ENCODE measurements at regions of chr1 and their contacts with region 1.

Region 1: GRCh38 chr1:156659994-156660751 is 17.0 kb downstream of the NES start:
- DNase-seq: peak; percentile 82 to 96 (median 89)
- ATAC-seq: peak; percentile 95
- H3K4me3 ChIP-seq: no peak overlapping the region
- H3K4me3 Mint-ChIP-seq: peak overlapping the region in 9 of 10 donors; percentile 4 to 90 (median 48)
- H3K27ac ChIP-seq: no peak overlapping the region
- H3K27ac Mint-ChIP-seq: peak overlapping the region in 8 of 9 donors; percentile 53 to 87 (median 69)
- H3K4me1 ChIP-seq: peaks cover 32 to 39% of the 10 kb centered on the region in 2 donors
- H3K4me1 Mint-ChIP-seq: peaks cover 33 to 62% (median 44%) of the 10 kb centered on the region in 7 donors
- H3K27me3 ChIP-seq: peaks cover 0 to 13% of the 10 kb centered on the region in 2 donors
- H3K27me3 Mint-ChIP-seq: peaks cover 18 to 30% (median 24%) of the 10 kb centered on the region in 5 donors

Region 2: GRCh38 chr1:156625436-156626078 is 34.6 kb before region 1 on chr1:
- CTCF ChIA-PET with region 1: interaction called, 18 read pairs
- POLR2A ChIA-PET with region 1: interaction called, 3 read pairs
- intact Hi-C with region 1: loop called (anchors 1 kb)
- DNase-seq: peak; percentile 51 to 78 (median 65)
- ATAC-seq: peak; percentile 83
- H3K4me3 ChIP-seq: peak overlapping the region; percentile 47
- H3K4me3 Mint-ChIP-seq: peak overlapping the region; percentile 74 to 92 (median 81)
- H3K27ac ChIP-seq: no peak overlapping the region
- H3K27ac Mint-ChIP-seq: peak overlapping the region in 4 of 9 donors; percentile 8 to 44 (median 21)
- H3K4me1 ChIP-seq: peaks cover 9 to 15% of the 10 kb centered on the region in 2 donors
- H3K4me1 Mint-ChIP-seq: peaks cover 7 to 13% (median 11%) of the 10 kb centered on the region in 7 donors
- H3K27me3 ChIP-seq: peaks cover 8 to 31% of the 10 kb centered on the region in 2 donors
- H3K27me3 Mint-ChIP-seq: peaks cover 46 to 71% (median 59%) of the 10 kb centered on the region in 5 donors

Region 3: DNA sequence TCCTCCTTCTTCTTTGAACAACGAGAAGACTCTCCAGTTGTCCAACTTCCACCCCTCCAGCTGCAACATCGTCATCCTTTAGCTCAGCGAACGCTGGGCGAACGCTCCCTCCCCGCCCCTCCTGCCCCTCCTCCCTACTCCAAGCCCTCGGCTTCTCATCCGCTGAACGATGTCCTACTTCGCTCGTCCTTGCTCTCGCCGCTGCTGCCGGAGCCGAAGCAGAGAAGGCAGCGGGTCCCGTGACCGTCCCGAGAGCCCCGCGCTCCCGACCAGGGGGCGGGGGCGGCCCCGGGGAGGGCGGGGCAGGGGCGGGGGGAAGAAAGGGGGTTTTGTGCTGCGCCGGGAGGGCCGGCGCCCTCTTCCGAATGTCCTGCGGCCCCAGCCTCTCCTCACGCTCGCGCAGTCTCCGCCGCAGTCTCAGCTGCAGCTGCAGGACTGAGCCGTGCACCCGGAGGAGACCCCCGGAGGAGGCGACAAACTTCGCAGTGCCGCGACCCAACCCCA is 18.4 kb before region 1 on chr1 and contains the start of gene BCAN:
- CTCF ChIA-PET with region 1: interaction called, 4 read pairs
- POLR2A ChIA-PET with region 1: interaction called, 4 read pairs
- intact Hi-C with region 1: loop called (anchors 2 kb)
- DNase-seq: no peak
- ATAC-seq: peak; percentile 31
- H3K4me3 ChIP-seq: no peak within 1 kb of the TSS
- H3K4me3 Mint-ChIP-seq: peak within 1 kb of the TSS; percentile 63 to 82 (median 74)
- H3K27ac ChIP-seq: no peak within 1 kb of the TSS
- H3K27ac Mint-ChIP-seq: no peak within 1 kb of the TSS
- H3K4me1 ChIP-seq: peaks cover 0 to 26% of the 10 kb centered on the region in 2 donors
- H3K4me1 Mint-ChIP-seq: peaks cover 24 to 40% (median 29%) of the 10 kb centered on the region in 7 donors
- H3K27me3 ChIP-seq: peaks cover 18 to 22% of the 10 kb centered on the region in 2 donors
- H3K27me3 Mint-ChIP-seq: peaks cover 78 to 89% (median 80%) of the 10 kb centered on the region in 5 donors
- total RNA-seq, gene BCAN: not detected

Region 4: GRCh38 chr1:156677616-156678596 is 17.7 kb after region 1 on chr1:
- CTCF ChIA-PET with region 1: interaction called, 5 read pairs
- POLR2A ChIA-PET with region 1: interaction called, 3 read pairs
- intact Hi-C with region 1: loop called (anchors 1 kb)
- DNase-seq: peak in 2 of 9 donors; percentile 23 to 34
- ATAC-seq: peak; percentile 61
- H3K4me3 ChIP-seq: no peak overlapping the region
- H3K4me3 Mint-ChIP-seq: peak overlapping the region in 9 of 10 donors; percentile 6 to 70 (median 49)
- H3K27ac ChIP-seq: no peak overlapping the region
- H3K27ac Mint-ChIP-seq: peak overlapping the region in 1 of 9 donors; percentile 1
- H3K4me1 ChIP-seq: peaks cover 3 to 6% of the 10 kb centered on the region in 2 donors
- H3K4me1 Mint-ChIP-seq: peaks cover 8 to 17% (median 14%) of the 10 kb centered on the region in 7 donors
- H3K27me3 ChIP-seq: peaks cover 11 to 20% of the 10 kb centered on the region in 2 donors
- H3K27me3 Mint-ChIP-seq: peaks cover 50 to 82% (median 60%) of the 10 kb centered on the region in 5 donors

Region 5: GRCh38 chr1:156705918-156706656 is 45.9 kb after region 1 on chr1:
- CTCF ChIA-PET with region 1: interaction called, 7 read pairs
- POLR2A ChIA-PET with region 1: interaction called, 3 read pairs
- intact Hi-C with region 1: loop called (anchors 1 kb)
- DNase-seq: peak; percentile 59 to 79 (median 68)
- ATAC-seq: peak; percentile 82
- H3K4me3 ChIP-seq: peak overlapping the region; percentile 81
- H3K4me3 Mint-ChIP-seq: peak overlapping the region; percentile 88 to 95 (median 92)
- H3K27ac ChIP-seq: peak overlapping the region; percentile 71
- H3K27ac Mint-ChIP-seq: peak overlapping the region; percentile 46 to 94 (median 92)
- H3K4me1 ChIP-seq: peaks cover 23 to 27% of the 10 kb centered on the region in 2 donors
- H3K4me1 Mint-ChIP-seq: peaks cover 11 to 37% (median 21%) of the 10 kb centered on the region in 7 donors
- H3K27me3 ChIP-seq: peaks cover 3 to 4% of the 10 kb centered on the region in 2 donors
- H3K27me3 Mint-ChIP-seq: peaks cover 8 to 44% (median 24%) of the 10 kb centered on the region in 5 donors

Region 6: GRCh38 chr1:156899956-156900718 is 240.0 kb after region 1 on chr1:
- CTCF ChIA-PET with region 1: no interaction called
- POLR2A ChIA-PET with region 1: no interaction called
- intact Hi-C with region 1: no loop called
- DNase-seq: no peak
- ATAC-seq: no peak
- H3K4me3 ChIP-seq: no peak overlapping the region
- H3K4me3 Mint-ChIP-seq: no peak overlapping the region
- H3K27ac ChIP-seq: no peak overlapping the region
- H3K27ac Mint-ChIP-seq: no peak overlapping the region
- H3K4me1 ChIP-seq: no peaks in the 10 kb centered on the region
- H3K4me1 Mint-ChIP-seq: peaks cover 7 to 16% (median 8%) of the 10 kb centered on the region in 7 donors
- H3K27me3 ChIP-seq: no peaks in the 10 kb centered on the region
- H3K27me3 Mint-ChIP-seq: peaks cover 11 to 27% (median 14%) of the 10 kb centered on the region in 5 donors

Region 7: DNA sequence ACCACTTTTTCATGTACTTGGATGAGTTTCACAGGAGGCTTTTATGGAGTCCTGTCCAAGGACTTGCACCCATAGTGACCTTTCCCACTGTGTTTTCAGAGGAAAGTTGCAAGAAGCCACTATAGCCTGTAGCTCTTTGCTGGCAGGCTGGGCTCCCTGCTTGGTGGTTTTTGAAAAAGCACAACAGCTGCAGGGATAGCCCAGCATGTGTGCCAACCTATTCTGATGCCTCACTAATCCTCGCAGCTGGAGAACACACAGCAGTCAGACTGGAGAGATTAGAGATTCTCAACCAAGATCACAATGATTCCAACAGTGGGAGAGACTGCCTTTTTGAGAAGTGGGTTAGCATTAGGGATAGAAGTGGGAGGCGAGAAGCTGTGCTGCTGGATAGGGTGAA is 409.4 kb after region 1 on chr1:
- CTCF ChIA-PET with region 1: no interaction called
- POLR2A ChIA-PET with region 1: no interaction called
- intact Hi-C with region 1: no loop called
- DNase-seq: no peak
- ATAC-seq: no peak
- H3K4me3 ChIP-seq: no peak overlapping the region
- H3K4me3 Mint-ChIP-seq: no peak overlapping the region
- H3K27ac ChIP-seq: no peak overlapping the region
- H3K27ac Mint-ChIP-seq: no peak overlapping the region
- H3K4me1 ChIP-seq: no peaks in the 10 kb centered on the region
- H3K4me1 Mint-ChIP-seq: peaks cover 0 to 11% (median 6%) of the 10 kb centered on the region in 7 donors
- H3K27me3 ChIP-seq: peaks cover 0 to 5% of the 10 kb centered on the region in 2 donors
- H3K27me3 Mint-ChIP-seq: peaks cover 41 to 50% (median 44%) of the 10 kb centered on the region in 5 donors

Measured in naive thymus-derived CD4-positive, alpha-beta T cell (primary cell).